PC-9 (cell line): ENCODE measurements at regions of chr4 and their contacts with region 1.

Region 1: DNA sequence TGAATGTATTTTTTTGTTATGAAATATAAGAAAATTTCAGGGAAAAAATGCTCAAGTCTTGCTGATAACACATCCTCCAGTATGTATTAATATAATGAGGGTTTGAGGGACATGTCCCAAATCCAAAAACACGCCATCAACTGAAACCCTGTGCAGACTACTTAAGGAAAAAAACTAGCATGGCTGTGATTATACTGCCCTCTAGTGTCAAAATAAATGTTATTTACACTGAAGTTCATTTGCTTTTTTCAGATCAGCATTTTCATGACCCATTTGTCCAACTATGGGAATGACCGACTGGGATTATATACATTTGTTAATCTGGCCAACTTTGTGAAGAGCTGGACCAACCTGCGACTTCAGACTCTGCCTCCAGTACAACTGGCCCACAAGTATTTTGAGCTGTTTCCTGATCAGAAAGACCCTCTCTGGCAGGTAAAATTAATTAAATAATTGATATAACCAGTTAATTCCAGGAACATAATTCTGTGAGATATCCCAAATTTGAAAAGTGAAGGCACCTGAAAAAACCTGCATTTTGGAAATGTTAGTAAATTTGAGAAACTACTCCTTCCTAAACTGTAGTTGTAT is 128.5 kb downstream of the PRSS12 start:
- DNase-seq: no peak
- H3K4me3 ChIP-seq: no peak overlapping the region
- H3K27ac ChIP-seq: no peak overlapping the region
- H3K4me1 ChIP-seq: no peaks in the 10 kb centered on the region
- H3K27me3 ChIP-seq: no peaks in the 10 kb centered on the region
- CTCF ChIP-seq: peak; percentile 72

Region 2: DNA sequence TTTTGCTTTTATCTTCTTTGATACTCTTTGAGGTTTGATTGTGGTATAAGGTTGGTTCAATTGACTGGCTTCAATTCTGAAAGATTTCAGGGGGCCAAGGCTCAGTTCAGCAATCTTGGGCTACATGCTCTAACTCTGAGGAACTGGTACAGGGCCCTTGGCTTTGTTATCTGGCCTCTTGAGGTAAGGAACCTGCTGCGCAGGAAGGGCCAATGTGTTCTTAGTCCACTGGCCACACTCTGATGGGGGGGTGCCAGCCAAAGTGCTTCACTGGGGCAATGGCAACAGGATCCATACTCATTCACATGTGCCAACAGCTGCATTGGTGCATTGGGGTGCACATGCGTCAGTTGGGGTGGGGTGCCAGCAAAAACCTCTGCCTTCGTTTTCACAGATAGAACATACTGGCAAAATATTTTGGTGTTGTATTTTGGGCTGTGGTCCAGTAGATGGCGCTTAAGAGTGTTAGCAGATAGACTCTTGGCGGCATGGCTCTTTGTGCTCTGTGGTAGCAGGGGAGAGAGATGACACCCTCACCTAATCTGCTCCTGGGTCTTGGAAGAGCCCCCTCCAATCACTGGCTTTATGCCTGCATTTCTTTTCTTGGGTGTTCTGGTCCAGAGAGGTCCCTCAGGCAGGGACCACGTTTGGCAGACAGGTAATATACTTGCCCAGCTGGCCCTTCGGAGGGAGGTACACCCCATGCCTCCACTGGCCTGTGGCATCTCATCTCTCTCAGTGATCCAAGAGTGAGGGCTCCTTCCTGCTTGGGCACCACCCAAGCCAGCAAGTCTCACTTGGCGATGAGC is 147.2 kb before region 1 on chr4:
- CTCF ChIA-PET with region 1: no interaction called
- POLR2A ChIA-PET with region 1: no interaction called
- intact Hi-C with region 1: loop called (anchors 5 kb)
- DNase-seq: no peak
- H3K4me3 ChIP-seq: no peak overlapping the region
- H3K27ac ChIP-seq: no peak overlapping the region
- H3K4me1 ChIP-seq: no peaks in the 10 kb centered on the region
- H3K27me3 ChIP-seq: no peaks in the 10 kb centered on the region
- CTCF ChIP-seq: peak; percentile 44; the same call in 1 of the 2 replicates

Region 3: GRCh38 chr4:118124997-118125396 is 99.3 kb before region 1 on chr4:
- CTCF ChIA-PET with region 1: no interaction called
- POLR2A ChIA-PET with region 1: no interaction called
- intact Hi-C with region 1: no loop called
- DNase-seq: no peak
- H3K4me3 ChIP-seq: no peak overlapping the region
- H3K27ac ChIP-seq: no peak overlapping the region
- H3K4me1 ChIP-seq: no peaks in the 10 kb centered on the region
- H3K27me3 ChIP-seq: no peaks in the 10 kb centered on the region
- CTCF ChIP-seq: no peak

Region 4: DNA sequence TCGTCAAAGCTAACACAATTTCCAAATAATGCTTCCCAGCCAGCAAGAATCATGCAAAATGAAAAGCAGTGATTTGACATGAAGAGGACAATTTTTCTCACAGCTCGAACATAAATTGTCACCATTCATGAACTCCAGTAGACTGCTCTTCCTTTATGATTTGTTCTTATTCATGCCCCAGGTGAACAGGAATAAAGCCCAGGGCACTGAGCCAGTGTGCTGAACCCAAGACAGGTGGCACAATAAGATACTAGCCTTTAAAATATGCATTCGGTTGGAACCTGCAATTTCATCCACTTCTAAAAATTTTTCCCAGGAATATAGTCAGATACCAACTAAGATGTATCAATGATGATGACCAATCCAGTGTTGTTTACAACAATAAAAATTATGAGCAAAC is 11.2 kb before region 1 on chr4:
- CTCF ChIA-PET with region 1: no interaction called
- POLR2A ChIA-PET with region 1: no interaction called
- intact Hi-C with region 1: no loop called
- DNase-seq: no peak
- H3K4me3 ChIP-seq: no peak overlapping the region
- H3K27ac ChIP-seq: no peak overlapping the region
- H3K4me1 ChIP-seq: no peaks in the 10 kb centered on the region
- H3K27me3 ChIP-seq: no peaks in the 10 kb centered on the region
- CTCF ChIP-seq: no peak